Dorsolateral prefrontal cortex (tissue), 120 donors: ENCODE measurements at regions of chr9 and their contacts with region 1.

Region 1: GRCh38 chr9:114587385-114588202 is at the start of gene ATP6V1G1:
- DNase-seq: peak; percentile 94 to 98 (median 96)
- H3K4me3 ChIP-seq: peak within 1 kb of the TSS; percentile 66 to 100 (median 96)
- H3K27ac ChIP-seq: peak within 1 kb of the TSS; percentile 66 to 97 (median 93)
- H3K27me3 ChIP-seq: no peaks in the 10 kb centered on the region
- CTCF ChIP-seq: peak in 47 of 56 donors; percentile 1 to 68 (median 42)
- total RNA-seq, gene ATP6V1G1: 40.7 to 117 (median 67.2) TPM

Region 2: DNA sequence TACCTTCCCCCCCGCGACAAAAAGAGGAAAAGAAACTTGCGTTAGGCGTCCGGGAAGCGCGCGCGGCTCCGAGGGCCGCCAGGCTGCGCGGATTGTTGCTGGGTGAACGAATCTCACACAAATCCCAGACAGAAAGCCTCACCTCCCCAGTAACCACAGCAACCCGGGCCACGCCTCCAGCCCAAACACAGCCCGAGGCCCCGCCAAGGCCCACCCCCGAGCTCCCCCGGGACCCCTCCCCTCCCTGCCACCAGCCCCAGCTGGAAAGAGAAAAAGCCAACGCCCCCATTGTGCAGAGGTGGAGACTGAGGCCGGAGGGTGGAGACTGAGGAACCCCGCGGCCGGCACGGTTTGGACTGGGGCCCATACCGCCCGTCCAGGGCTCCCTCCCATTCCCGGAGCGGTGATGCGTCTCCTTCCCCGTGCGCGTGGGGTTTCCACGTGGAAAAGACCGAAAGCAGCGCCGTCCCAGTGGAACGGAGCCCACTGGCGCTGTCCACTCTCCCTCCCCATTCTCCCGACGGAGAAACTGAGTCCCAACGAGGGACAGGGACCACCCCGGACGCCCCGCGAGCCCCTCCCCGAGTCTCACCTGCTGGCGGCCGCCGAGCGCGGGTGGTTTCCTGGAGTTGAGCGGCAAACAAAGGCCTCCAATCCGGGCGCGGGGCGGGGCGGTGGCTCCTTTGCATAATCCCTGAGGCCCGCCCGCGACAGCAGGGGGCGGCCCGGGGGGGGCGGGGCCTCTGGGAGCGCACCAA is 189.6 kb before region 1 on chr9:
- intact Hi-C with region 1: loop called (anchors 5 to 10 kb)
- DNase-seq: peak; percentile 74 to 97 (median 95)
- H3K4me3 ChIP-seq: peak overlapping the region; percentile 62 to 98 (median 87)
- H3K27ac ChIP-seq: peak overlapping the region in 57 of 59 donors; percentile 4 to 89 (median 74)
- H3K27me3 ChIP-seq: no peaks in the 10 kb centered on the region
- CTCF ChIP-seq: peak in 31 of 56 donors; percentile 6 to 60 (median 30)

Region 3: DNA sequence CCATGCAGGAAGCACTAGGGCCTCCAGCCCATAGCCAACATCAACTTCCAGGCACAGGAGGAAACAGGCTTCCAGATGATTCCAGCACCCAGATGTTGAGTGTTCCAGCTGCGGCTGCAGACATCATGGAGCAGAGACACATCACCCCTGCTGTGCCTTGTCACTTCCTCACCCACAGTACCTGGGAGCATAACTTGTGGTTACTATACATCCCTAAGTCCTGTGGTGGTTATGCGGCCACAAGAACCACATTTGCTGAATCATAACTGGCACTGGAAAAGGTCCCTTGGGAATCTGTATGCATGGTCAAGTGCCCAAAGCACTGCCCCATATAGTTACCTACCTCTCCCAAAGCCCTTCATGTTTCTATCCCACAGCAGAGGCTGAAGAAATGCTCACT is 138.9 kb before region 1 on chr9:
- intact Hi-C with region 1: loop called in 1 of 2 experiments (anchors 2 kb)
- DNase-seq: peak in 1 of 10 donors; percentile 5
- H3K4me3 ChIP-seq: no peak overlapping the region
- H3K27ac ChIP-seq: peak overlapping the region in 28 of 59 donors; percentile 1 to 98 (median 54)
- H3K27me3 ChIP-seq: no peaks in the 10 kb centered on the region
- CTCF ChIP-seq: no peak

Region 4: GRCh38 chr9:114513055-114513958 is 74.3 kb before region 1 on chr9:
- intact Hi-C with region 1: loop called (anchors 5 kb)
- DNase-seq: no peak
- H3K4me3 ChIP-seq: no peak overlapping the region
- H3K27ac ChIP-seq: no peak overlapping the region
- H3K27me3 ChIP-seq: no peaks in the 10 kb centered on the region
- CTCF ChIP-seq: no peak

Region 5: DNA sequence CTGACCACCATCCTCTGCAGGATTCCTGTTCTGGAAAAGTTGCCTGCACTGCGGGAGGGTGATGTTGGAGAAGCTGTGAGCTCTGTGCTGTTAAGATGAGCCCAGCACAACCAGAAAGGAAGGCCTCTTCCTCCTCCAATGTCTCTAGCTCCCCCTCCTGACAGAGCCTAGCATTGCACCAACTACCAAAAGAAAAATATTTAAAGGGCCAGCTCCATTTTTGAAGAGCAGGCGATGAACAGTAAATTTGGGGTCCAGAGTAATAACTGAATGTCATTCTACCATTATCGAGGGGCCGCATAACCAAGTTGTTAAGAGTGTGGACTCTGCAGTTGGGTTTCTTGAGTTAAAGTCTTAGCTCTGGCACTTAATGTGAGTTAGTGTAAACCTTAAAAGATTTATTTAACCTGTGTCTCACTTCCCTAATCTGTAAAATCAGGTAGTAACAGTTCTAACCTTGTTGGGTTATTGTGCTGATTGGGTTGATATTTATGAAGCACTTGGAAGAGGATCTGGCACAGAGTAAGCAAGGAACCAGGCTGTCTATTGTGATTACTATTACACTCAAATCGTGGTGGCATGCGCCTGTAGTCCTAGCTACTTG is 66.1 kb after region 1 on chr9:
- intact Hi-C with region 1: loop called in 1 of 2 experiments (anchors 2 kb)
- DNase-seq: peak in 8 of 10 donors; percentile 23 to 62 (median 49)
- H3K4me3 ChIP-seq: no peak overlapping the region
- H3K27ac ChIP-seq: peak overlapping the region in 33 of 59 donors; percentile 11 to 92 (median 58)
- H3K27me3 ChIP-seq: no peaks in the 10 kb centered on the region
- CTCF ChIP-seq: peak; percentile 66 to 95 (median 87)

Region 6: GRCh38 chr9:114824110-114824509 is 236.5 kb after region 1 on chr9:
- intact Hi-C with region 1: no loop called
- DNase-seq: no peak
- H3K4me3 ChIP-seq: no peak overlapping the region
- H3K27ac ChIP-seq: no peak overlapping the region
- H3K27me3 ChIP-seq: peaks cover 0 to 6% (median 0%) of the 10 kb centered on the region in 45 donors
- CTCF ChIP-seq: no peak